Prostate gland (tissue), 2 donors: ENCODE measurements at regions of chr11 and their contacts with region 1.

Region 1: GRCh38 chr11:13955971-13956421 is 6.5 kb upstream of the SPON1 start:
- DNase-seq: peak; percentile 46
- H3K4me3 ChIP-seq: no peak overlapping the region
- H3K27ac ChIP-seq: no peak overlapping the region
- H3K4me1 ChIP-seq: no peaks in the 10 kb centered on the region
- H3K27me3 ChIP-seq: no peaks in the 10 kb centered on the region
- CTCF ChIP-seq: peak; percentile 75 to 94 (median 88)
- POLR2A ChIP-seq: no peak

Region 2: GRCh38 chr11:14148653-14149273 is 192.8 kb after region 1 on chr11:
- intact Hi-C with region 1: loop called (anchors 2 kb)
- DNase-seq: no peak
- H3K4me3 ChIP-seq: no peak overlapping the region
- H3K27ac ChIP-seq: no peak overlapping the region
- H3K4me1 ChIP-seq: no peaks in the 10 kb centered on the region
- H3K27me3 ChIP-seq: no peaks in the 10 kb centered on the region
- CTCF ChIP-seq: peak; percentile 35 to 84 (median 70)
- POLR2A ChIP-seq: no peak